Vagina (tissue), 2 donors: ENCODE measurements at regions of chr3 and their contacts with region 1.

Region 1: GRCh38 chr3:61561374-61562041 is at the start of gene PTPRG:
- DNase-seq: peak in 1 of 2 donors; percentile 93
- H3K4me3 ChIP-seq: peak within 1 kb of the TSS; percentile 65 to 84
- H3K27ac ChIP-seq: peak within 1 kb of the TSS; percentile 86
- H3K4me1 ChIP-seq: peaks cover 28% of the 10 kb centered on the region
- H3K27me3 ChIP-seq: no peaks in the 10 kb centered on the region
- CTCF ChIP-seq: no peak
- POLR2A ChIP-seq: peak in 1 of 2 donors; percentile 44
- total RNA-seq, gene PTPRG: 47.6 TPM

Region 2: GRCh38 chr3:61371123-61371522 is 190.4 kb before region 1 on chr3:
- intact Hi-C with region 1: no loop called
- DNase-seq: no peak
- H3K4me3 ChIP-seq: no peak overlapping the region
- H3K27ac ChIP-seq: no peak overlapping the region
- H3K4me1 ChIP-seq: no peaks in the 10 kb centered on the region
- H3K27me3 ChIP-seq: no peaks in the 10 kb centered on the region
- CTCF ChIP-seq: no peak
- POLR2A ChIP-seq: no peak

Region 3: DNA sequence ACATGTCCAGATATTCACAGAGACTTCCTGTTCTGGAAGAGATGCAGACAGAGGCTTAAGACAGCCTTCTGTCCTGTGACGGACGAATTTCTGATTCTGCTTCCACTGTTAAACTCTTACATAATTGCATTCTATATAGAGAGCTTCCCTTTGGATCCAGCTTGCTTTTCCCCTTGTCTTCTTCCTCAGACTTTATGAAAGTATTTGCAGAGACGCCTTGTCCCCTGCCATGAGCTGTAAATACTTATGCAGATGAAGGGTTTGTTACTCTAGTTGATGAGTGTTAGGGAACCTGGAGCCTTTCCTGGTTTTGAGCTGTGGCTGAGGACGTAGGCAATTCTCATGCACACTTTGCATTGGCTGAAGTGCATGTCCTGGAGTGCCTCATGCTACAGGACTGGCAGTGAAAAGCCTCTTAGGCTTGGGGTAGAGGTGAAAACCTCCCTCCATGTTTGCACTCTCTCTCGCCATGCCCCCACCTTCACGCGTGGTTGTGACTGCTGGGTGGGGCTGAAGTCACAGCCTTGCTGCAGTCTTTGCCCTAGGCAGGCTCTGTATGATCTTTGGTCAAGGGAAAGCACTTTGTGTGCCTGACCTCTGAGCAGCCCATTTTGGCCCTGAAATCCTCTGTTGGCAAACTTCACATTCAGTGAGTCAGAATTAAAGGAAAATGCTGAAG is 286.4 kb after region 1 on chr3:
- intact Hi-C with region 1: loop called (anchors 2 kb)
- DNase-seq: no peak
- H3K4me3 ChIP-seq: peak overlapping the region in 1 of 2 donors; percentile 11
- H3K27ac ChIP-seq: peak overlapping the region; percentile 61
- H3K4me1 ChIP-seq: peaks cover 37% of the 10 kb centered on the region
- H3K27me3 ChIP-seq: no peaks in the 10 kb centered on the region
- CTCF ChIP-seq: no peak
- POLR2A ChIP-seq: no peak

Region 4: DNA sequence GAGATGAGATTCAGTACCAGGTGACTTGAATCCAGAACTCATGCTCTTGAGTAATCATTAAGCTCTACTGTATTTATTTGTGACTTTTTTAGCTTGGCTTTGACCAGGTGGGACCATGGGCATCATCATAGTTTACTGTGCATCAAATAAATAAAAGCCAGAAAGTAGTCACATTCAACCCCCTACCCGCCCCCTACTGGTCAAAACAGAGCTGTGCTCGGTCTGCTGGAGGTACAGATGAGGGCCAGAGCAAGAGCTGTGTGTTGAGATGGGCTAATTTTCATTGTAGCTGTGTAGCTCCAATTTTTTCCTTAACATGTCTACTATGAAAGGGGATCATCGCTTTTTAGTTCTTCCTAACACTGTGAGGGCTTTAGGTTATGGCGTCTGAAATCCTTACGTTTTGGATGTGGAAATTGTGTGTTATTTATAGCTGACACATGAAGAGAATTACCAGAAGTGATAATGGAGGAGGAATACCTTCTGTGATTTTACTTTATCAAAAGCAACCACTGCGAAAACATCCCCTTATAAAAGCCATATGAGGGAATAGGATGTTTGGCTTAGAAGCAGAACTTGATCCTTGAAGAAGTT is 374.9 kb after region 1 on chr3:
- intact Hi-C with region 1: loop called (anchors 10 kb)
- DNase-seq: no peak
- H3K4me3 ChIP-seq: no peak overlapping the region
- H3K27ac ChIP-seq: no peak overlapping the region
- H3K4me1 ChIP-seq: peaks cover 5% of the 10 kb centered on the region
- H3K27me3 ChIP-seq: no peaks in the 10 kb centered on the region
- CTCF ChIP-seq: peak in 2 of 3 experiments; percentile 22 to 26
- POLR2A ChIP-seq: no peak

Region 5: DNA sequence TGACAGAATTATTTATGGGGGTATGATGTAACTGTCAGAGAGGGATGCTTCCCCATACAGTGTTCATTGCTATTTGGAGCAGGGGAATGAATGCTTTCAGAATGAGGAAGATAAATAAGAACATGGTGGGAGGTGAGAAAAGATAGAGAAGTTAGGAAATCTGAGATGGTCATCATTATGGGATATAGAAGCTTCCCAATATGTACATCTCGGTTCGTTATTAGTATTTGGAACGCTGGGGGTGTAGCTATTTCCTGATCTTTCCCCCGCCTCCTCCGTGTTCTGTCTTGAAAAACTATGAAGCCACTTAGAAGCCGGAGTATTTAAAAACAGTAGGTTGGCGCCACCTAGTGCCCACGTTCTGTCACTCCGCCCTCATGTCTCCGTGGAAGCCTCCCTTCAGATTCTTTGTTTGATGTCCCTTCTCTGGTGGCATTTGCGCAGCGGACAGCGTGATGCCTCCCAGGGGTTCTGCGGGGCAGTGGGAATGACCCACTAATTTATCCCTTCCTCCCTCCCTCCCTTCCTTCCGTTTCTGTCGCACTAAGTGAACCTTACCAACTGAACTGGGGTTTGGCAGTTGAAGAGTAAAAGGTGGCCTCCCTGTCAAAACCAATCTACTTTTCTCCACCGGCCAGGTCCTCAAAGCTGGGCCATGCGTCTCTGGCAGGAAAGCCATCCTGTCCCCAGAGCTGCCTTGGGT is 627.3 kb after region 1 on chr3:
- intact Hi-C with region 1: loop called (anchors 2 kb)
- DNase-seq: no peak
- H3K4me3 ChIP-seq: no peak overlapping the region
- H3K27ac ChIP-seq: no peak overlapping the region
- H3K4me1 ChIP-seq: peaks cover 7% of the 10 kb centered on the region
- H3K27me3 ChIP-seq: no peaks in the 10 kb centered on the region
- CTCF ChIP-seq: peak; percentile 63 to 75 (median 71)
- POLR2A ChIP-seq: no peak